ENCODE measurements at regions of chr6 and their contacts with region 1.

Region 1: GRCh38 chr6:52352239-52353008 is 9.5 kb upstream of the PAQR8 start:
- DNase-seq: no peak
- H3K4me3 ChIP-seq: no peak overlapping the region
- H3K27ac ChIP-seq: peak overlapping the region in 1 of 4 donors; percentile 40
- H3K4me1 ChIP-seq: peaks cover 0 to 12% (median 4%) of the 10 kb centered on the region in 4 donors
- H3K27me3 ChIP-seq: no peaks in the 10 kb centered on the region
- CTCF ChIP-seq: no peak
- EP300 ChIP-seq: no peak
- POLR2A ChIP-seq: no peak

Region 2: DNA sequence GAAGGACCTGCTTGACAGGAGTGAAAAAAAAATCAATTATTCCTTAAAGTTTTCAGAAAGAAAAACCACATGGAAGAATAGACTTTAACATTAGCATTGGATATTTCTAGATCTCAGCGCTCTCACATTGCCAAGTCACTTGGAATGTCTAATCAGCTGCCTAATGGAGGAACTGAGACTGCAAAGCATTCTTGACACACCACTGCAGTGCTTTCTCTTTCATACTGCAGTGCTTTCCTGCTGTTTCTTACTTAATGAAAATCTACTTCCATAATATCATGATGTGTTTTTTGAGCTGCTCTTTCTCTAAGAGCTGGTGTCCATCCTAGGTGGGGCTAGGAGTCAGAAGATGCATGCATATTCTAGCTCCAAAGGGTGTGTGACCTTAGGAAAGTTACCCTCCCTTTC is 47.4 kb before region 1 on chr6:
- intact Hi-C with region 1: loop called (anchors 10 kb)
- DNase-seq: no peak
- H3K4me3 ChIP-seq: peak overlapping the region in 1 of 4 donors; percentile 2
- H3K27ac ChIP-seq: peak overlapping the region; percentile 39 to 67 (median 62)
- H3K4me1 ChIP-seq: peaks cover 18 to 35% (median 30%) of the 10 kb centered on the region in 4 donors
- H3K27me3 ChIP-seq: no peaks in the 10 kb centered on the region
- CTCF ChIP-seq: no peak
- EP300 ChIP-seq: no peak
- POLR2A ChIP-seq: no peak